ENCODE measurements at regions of chr9 and their contacts with region 1.

Region 1: GRCh38 chr9:113675475-113675941 is 200.6 kb upstream of the ZNF618 start:
- DNase-seq: peak; percentile 99
- H3K4me3 ChIP-seq: no peak overlapping the region
- H3K27ac ChIP-seq: peak overlapping the region; percentile 83
- H3K4me1 ChIP-seq: peaks cover 30% of the 10 kb centered on the region
- H3K27me3 ChIP-seq: no peaks in the 10 kb centered on the region
- CTCF ChIP-seq: no peak
- POLR2A ChIP-seq: peak; percentile 64

Region 2: GRCh38 chr9:113609562-113610318 is 65.8 kb before region 1 on chr9:
- CTCF ChIA-PET with region 1: no interaction called
- POLR2A ChIA-PET with region 1: no interaction called
- dilution Hi-C with region 1: no loop called
- intact Hi-C with region 1: loop called (anchors 1 kb)
- DNase-seq: peak; percentile 96
- H3K4me3 ChIP-seq: no peak overlapping the region
- H3K27ac ChIP-seq: peak overlapping the region; percentile 98
- H3K4me1 ChIP-seq: peaks cover 26% of the 10 kb centered on the region
- H3K27me3 ChIP-seq: no peaks in the 10 kb centered on the region
- CTCF ChIP-seq: no peak
- POLR2A ChIP-seq: no peak